Panc1 (cell line): ENCODE measurements at regions of chr2 and their contacts with region 1.

Region 1: DNA sequence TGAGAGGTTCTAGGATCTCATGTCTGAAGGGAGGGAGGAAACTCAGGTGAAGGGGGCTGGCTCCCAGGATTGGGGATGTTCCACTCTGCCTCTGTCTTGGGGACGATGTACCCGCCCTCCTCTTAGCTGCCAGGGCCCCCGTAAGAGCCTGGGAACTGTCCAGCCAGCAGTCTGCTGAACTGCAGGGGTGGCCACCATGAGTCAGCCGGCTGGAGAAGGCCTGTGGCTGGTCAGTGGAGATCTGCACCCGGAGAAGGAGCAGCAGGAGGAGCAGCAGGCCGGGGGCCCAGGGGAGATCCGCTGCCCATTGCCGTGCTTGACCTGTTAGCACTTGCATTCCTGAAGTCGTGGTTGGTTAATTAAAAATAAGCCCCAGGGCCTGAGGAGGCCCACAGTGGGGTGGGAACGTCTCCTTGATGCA is 180.3 kb downstream of the TFCP2L1 start:
- DNase-seq: no peak
- ATAC-seq: no peak
- H3K4me3 ChIP-seq: no peak overlapping the region
- H3K27ac ChIP-seq: no peak overlapping the region
- H3K4me1 ChIP-seq: no peaks in the 10 kb centered on the region
- H3K27me3 ChIP-seq: peaks cover 3% of the 10 kb centered on the region; the same call in 1 of the 2 replicates
- CTCF ChIP-seq: no peak

Region 2: DNA sequence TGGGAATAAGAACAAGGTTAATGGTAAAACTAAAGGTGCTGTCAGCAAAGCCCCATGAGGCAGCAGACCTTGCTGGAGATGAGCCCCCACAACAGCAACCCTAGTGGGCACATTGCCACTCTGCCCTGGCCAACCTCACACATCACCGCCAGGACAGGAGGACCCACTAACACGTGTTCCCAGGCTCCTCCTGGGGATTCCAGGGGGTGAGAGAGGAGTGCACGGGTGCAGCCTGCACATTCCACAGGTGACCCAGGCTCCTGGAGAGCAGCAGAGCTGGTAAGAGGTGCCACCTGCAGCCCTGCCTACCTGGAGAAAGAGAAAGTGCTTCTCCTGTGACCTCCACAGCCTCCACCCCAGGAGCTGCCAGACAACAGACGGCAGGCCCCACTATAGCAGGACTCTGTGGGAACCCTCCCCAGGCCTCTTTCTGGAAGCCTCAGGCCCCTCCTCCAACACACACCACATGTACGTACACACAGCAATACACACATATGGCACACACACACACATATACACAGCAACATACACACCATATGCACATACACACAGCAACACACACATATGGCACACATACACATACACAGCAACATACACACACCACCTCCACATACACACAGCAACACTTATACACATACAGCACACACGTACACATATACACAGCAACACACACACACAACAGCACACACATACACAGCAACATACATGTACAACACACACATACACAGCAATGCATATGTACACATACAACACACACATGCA is 182.0 kb before region 1 on chr2:
- CTCF ChIA-PET with region 1: interaction called, 11 read pairs
- POLR2A ChIA-PET with region 1: no interaction called
- in situ Hi-C with region 1: no loop called
- intact Hi-C with region 1: no loop called
- DNase-seq: no peak
- ATAC-seq: no peak
- H3K4me3 ChIP-seq: no peak overlapping the region
- H3K27ac ChIP-seq: no peak overlapping the region
- H3K4me1 ChIP-seq: no peaks in the 10 kb centered on the region
- H3K27me3 ChIP-seq: no peaks in the 10 kb centered on the region
- CTCF ChIP-seq: no peak

Region 3: DNA sequence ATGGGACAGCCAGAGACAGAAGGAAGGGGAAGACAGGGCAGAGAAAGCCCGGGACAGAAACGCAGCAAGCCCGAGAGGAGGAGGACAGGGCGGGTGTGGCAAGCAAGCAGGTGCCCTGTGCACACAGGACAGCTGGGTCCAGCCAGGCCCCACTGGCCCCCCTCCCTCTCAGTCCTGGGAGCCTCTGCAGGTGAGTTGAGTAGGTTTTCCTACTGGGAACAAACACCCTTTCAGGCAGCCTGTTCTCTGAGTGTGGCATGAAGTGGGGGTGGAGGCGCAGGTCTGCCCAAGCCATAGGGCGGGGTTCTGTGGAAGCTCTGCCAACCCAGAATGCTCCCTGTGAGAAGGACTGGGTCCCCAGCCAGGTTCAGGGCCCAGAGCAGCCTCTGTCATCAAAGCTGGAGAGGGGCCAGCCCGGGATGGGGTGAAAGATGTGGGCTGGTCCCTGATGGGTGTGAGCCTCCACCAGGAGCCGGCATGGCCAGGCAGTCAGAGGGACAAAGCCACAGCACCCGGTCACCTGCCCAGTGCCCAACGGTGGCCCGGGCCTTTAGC is 50.8 kb after region 1 on chr2:
- CTCF ChIA-PET with region 1: no interaction called
- POLR2A ChIA-PET with region 1: no interaction called
- in situ Hi-C with region 1: no loop called
- intact Hi-C with region 1: no loop called
- DNase-seq: no peak
- ATAC-seq: peak; percentile 56; the same call in 1 of the 2 replicates
- H3K4me3 ChIP-seq: no peak overlapping the region
- H3K27ac ChIP-seq: no peak overlapping the region
- H3K4me1 ChIP-seq: no peaks in the 10 kb centered on the region
- H3K27me3 ChIP-seq: no peaks in the 10 kb centered on the region
- CTCF ChIP-seq: no peak